HepG2 (cell line): ENCODE measurements at regions of chr1 and their contacts with region 1.

Region 1: GRCh38 chr1:178542560-178543356 is 29.8 kb downstream of the TEX35 start:
- DNase-seq: peak; percentile 67
- ATAC-seq: peak; percentile 76
- H3K4me3 ChIP-seq: peak overlapping the region; percentile 72 to 91 (median 87)
- H3K27ac ChIP-seq: peak overlapping the region; percentile 92
- H3K4me1 ChIP-seq: peaks cover 52% of the 10 kb centered on the region
- H3K27me3 ChIP-seq: no peaks in the 10 kb centered on the region; a peak in 1 of 5 replicates
- CTCF ChIP-seq: peak; percentile 83
- EP300 ChIP-seq: peak in 1 of 2 experiments; percentile 5; a peak in 1 of 4 replicates
- POLR2A ChIP-seq: no peak; a peak in 1 of 4 replicates
- RAD21 ChIP-seq: peak; percentile 94

Region 2: GRCh38 chr1:178564086-178564782 is 21.5 kb after region 1 on chr1:
- CTCF ChIA-PET with region 1: no interaction called
- POLR2A ChIA-PET with region 1: interaction called, 11 read pairs
- in situ Hi-C with region 1: no loop called
- intact Hi-C with region 1: no loop called
- DNase-seq: peak; percentile 70
- ATAC-seq: peak; percentile 82
- H3K4me3 ChIP-seq: no peak overlapping the region; a peak in 1 of 6 replicates
- H3K27ac ChIP-seq: no peak overlapping the region
- H3K4me1 ChIP-seq: peaks cover 21% of the 10 kb centered on the region
- H3K27me3 ChIP-seq: no peaks in the 10 kb centered on the region
- CTCF ChIP-seq: no peak
- EP300 ChIP-seq: peak in 1 of 2 experiments; percentile 22; a peak in 1 of 4 replicates
- POLR2A ChIP-seq: no peak
- RAD21 ChIP-seq: no peak

Region 3: GRCh38 chr1:178684542-178685000 is 141.8 kb after region 1 on chr1:
- CTCF ChIA-PET with region 1: no interaction called
- POLR2A ChIA-PET with region 1: interaction called, 4 read pairs
- in situ Hi-C with region 1: no loop called
- intact Hi-C with region 1: loop called (anchors 10 kb)
- DNase-seq: peak; percentile 52
- ATAC-seq: no peak
- H3K4me3 ChIP-seq: no peak overlapping the region
- H3K27ac ChIP-seq: peak overlapping the region; percentile 25
- H3K4me1 ChIP-seq: peaks cover 41% of the 10 kb centered on the region
- H3K27me3 ChIP-seq: no peaks in the 10 kb centered on the region
- CTCF ChIP-seq: no peak
- EP300 ChIP-seq: peak in 1 of 2 experiments; percentile 62; a peak in 1 of 4 replicates
- POLR2A ChIP-seq: no peak
- RAD21 ChIP-seq: no peak

Region 4: DNA sequence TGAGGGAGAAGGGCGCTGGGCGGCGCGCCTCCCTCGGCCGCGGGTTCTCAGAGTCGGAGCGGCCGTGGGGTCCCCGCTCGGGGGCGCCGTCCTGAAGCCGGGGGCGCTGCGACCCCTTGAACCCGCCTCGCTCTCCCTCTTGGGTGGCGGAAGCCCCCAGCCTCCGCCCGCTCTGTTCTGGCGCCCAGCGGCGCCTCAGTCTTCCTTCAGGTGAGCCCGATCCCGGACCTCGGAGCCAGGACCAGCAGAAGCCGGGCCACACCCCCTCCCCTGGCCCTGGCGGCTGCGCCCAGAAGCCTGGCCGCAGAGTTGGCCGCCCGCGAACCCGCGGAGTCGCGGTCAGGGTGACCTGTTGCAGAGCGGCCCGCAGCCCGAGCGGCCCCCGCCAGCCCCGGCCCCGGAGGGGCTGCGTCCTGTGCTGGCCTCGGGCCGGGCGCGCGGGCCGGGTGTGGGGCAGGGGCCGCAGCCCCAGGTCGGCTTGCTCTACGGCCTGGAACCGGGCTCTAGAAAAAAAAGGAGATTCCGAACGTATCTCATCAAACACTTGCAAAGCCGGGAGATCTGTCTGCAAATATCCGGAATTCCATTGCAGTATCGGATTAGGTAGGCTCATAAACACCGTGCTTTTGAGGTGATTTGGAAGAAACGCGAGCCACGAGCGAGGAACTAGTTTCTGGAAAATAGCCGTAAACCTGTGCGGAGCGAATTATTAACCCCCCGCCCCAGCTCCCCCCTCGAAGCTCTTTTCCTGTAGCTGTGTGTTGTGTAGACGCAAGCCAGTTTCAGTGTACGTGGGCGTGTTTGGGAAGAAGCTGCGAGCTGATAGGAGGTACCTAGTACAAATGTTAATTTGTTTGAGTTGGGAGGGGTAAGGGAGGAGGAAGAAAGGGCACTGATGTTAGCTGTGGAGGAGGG is 183.1 kb after region 1 on chr1:
- CTCF ChIA-PET with region 1: interaction called, 8 read pairs
- POLR2A ChIA-PET with region 1: interaction called, 26 read pairs
- in situ Hi-C with region 1: no loop called
- intact Hi-C with region 1: loop called (anchors 2 kb)
- DNase-seq: peak; percentile 94
- ATAC-seq: peak; percentile 87
- H3K4me3 ChIP-seq: peak overlapping the region; percentile 87 to 95 (median 91)
- H3K27ac ChIP-seq: peak overlapping the region; percentile 95
- H3K4me1 ChIP-seq: peaks cover 33% of the 10 kb centered on the region
- H3K27me3 ChIP-seq: no peaks in the 10 kb centered on the region
- CTCF ChIP-seq: peak; percentile 20; the same call in 1 of the 2 replicates
- EP300 ChIP-seq: no peak
- POLR2A ChIP-seq: peak; percentile 64 to 78
- RAD21 ChIP-seq: peak; percentile 36

Region 5: GRCh38 chr1:178870944-178871343 is 328.2 kb after region 1 on chr1 and contains the start of gene ANGPTL1:
- CTCF ChIA-PET with region 1: no interaction called
- POLR2A ChIA-PET with region 1: interaction called, 3 read pairs
- in situ Hi-C with region 1: no loop called
- intact Hi-C with region 1: loop called (anchors 10 kb)
- DNase-seq: peak; percentile 88
- ATAC-seq: peak; percentile 88
- H3K4me3 ChIP-seq: peak within 1 kb of the TSS; percentile 46 to 75 (median 68)
- H3K27ac ChIP-seq: peak within 1 kb of the TSS; percentile 63
- H3K4me1 ChIP-seq: peaks cover 54% of the 10 kb centered on the region
- H3K27me3 ChIP-seq: no peaks in the 10 kb centered on the region
- CTCF ChIP-seq: no peak
- EP300 ChIP-seq: peak in 1 of 2 experiments; percentile 65; a peak in 2 of 4 replicates
- POLR2A ChIP-seq: no peak
- RAD21 ChIP-seq: no peak
- total RNA-seq, gene ANGPTL1: 2.2 and 2.9 TPM in 2 replicates